ENCODE measurements at regions of chr14 and their contacts with region 1.

Region 1: GRCh38 chr14:52043690-52044089 is 25.2 kb downstream of the NID2 start:
- DNase-seq: no peak
- H3K4me3 ChIP-seq: no peak overlapping the region
- CTCF ChIP-seq: peak; percentile 59

Region 2: DNA sequence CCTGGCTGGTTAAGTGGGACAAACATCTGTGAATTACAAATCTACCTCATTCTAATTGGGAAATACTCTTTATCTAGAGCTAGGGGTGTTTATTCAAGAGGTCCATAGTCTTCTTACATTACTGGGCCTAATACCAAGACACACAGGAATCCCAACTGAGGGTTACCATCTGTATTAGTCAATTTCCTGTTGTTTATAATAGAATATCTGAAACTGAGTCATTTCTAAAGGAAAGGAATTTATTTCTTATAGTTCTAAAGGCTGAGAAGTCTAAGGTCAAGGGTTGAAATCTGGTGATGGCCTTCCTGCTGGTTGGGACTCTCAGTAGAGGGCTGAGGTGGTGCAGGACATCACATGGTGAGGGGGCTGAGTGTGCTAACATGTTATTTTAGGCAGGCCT is 18.4 kb before region 1 on chr14:
- CTCF ChIA-PET with region 1: interaction called, 20 read pairs
- POLR2A ChIA-PET with region 1: interaction called, 7 read pairs
- DNase-seq: peak; percentile 92
- H3K4me3 ChIP-seq: no peak overlapping the region
- CTCF ChIP-seq: no peak

Region 3: DNA sequence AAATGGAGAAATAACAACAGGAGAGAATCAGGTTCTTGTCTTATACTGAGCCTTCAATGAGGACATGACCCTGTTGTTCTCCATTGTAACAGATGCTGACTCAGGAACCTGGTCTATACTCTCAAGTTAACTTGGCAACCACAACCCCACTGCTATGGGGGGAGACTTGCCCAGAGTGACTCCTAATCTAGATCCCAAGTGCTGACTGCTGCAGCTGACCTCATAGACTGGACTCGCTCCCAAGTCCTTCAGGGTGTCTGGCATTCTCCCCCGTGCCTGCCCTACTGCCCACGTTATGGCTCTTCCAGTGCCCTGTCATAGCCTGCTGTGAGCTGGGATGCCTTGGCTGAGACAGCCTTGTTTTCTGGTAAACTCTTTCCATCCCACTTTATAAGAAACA is 11.9 kb before region 1 on chr14:
- CTCF ChIA-PET with region 1: interaction called, 20 read pairs
- POLR2A ChIA-PET with region 1: interaction called, 4 read pairs
- DNase-seq: no peak
- H3K4me3 ChIP-seq: no peak overlapping the region
- CTCF ChIP-seq: no peak

Region 4: GRCh38 chr14:52068615-52069303 is 25.1 kb after region 1 on chr14 and contains the start of gene NID2:
- CTCF ChIA-PET with region 1: interaction called, 9 read pairs
- POLR2A ChIA-PET with region 1: interaction called, 14 read pairs
- DNase-seq: no peak
- H3K4me3 ChIP-seq: peak within 1 kb of the TSS; percentile 88
- CTCF ChIP-seq: no peak

Measured in AG04449 (cell line).